PC-9 (cell line): ENCODE measurements at regions of chr19 and their contacts with region 1.

Region 1: DNA sequence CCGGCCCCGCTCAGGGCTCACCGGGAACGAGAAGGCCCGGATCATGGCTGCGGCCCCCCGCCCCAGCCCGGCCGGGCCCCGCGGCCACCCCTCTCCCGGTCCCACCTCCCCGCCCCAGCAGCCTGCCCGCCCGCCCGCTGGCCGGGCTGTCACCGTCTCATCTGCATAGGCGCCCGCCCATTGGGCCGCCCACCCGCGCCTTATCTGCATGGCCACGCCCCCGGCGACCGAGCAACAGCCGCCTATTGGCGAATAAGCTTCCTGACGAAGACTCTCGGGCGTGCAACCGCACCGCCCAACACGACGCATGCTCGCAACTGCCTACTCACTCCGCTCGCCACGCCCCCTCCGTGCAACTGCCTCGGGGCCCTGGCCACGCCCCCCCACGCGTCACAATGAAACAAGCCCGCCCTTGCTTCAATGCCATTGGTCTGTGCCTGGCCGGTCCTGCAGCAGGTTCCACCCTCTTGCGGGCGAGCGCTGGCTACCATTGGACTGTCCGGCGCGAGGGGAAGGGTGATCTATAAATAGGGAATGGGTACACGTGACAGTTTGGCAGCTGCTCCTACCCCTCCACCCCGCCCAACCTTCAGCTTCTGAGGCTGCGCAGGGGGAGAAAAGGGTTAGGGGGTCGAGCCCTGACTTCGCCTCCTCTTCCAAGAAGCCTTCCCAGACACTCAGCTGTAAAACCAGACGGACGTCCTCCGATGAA is at the start of gene DACT3:
- DNase-seq: peak; percentile 99 to 100
- H3K4me3 ChIP-seq: peak within 1 kb of the TSS; percentile 59
- H3K27ac ChIP-seq: no peak within 1 kb of the TSS
- H3K4me1 ChIP-seq: peaks cover 12% of the 10 kb centered on the region
- H3K27me3 ChIP-seq: peaks cover 31% of the 10 kb centered on the region
- CTCF ChIP-seq: no peak
- total RNA-seq, gene DACT3: 0.13 TPM in 1 of 2 replicates, not detected in the other

Region 2: GRCh38 chr19:46040952-46041500 is 620.1 kb before region 1 on chr19 and contains the start of gene IGFL4:
- CTCF ChIA-PET with region 1: no interaction called
- POLR2A ChIA-PET with region 1: interaction called, 16 read pairs
- intact Hi-C with region 1: no loop called
- DNase-seq: peak; percentile 40 to 80
- H3K4me3 ChIP-seq: no peak within 1 kb of the TSS
- H3K27ac ChIP-seq: no peak within 1 kb of the TSS
- H3K4me1 ChIP-seq: peaks cover 27% of the 10 kb centered on the region
- H3K27me3 ChIP-seq: peaks cover 33% of the 10 kb centered on the region; the same call in 1 of the 2 replicates
- CTCF ChIP-seq: no peak
- total RNA-seq, gene IGFL4: not detected in 2 replicates

Region 3: DNA sequence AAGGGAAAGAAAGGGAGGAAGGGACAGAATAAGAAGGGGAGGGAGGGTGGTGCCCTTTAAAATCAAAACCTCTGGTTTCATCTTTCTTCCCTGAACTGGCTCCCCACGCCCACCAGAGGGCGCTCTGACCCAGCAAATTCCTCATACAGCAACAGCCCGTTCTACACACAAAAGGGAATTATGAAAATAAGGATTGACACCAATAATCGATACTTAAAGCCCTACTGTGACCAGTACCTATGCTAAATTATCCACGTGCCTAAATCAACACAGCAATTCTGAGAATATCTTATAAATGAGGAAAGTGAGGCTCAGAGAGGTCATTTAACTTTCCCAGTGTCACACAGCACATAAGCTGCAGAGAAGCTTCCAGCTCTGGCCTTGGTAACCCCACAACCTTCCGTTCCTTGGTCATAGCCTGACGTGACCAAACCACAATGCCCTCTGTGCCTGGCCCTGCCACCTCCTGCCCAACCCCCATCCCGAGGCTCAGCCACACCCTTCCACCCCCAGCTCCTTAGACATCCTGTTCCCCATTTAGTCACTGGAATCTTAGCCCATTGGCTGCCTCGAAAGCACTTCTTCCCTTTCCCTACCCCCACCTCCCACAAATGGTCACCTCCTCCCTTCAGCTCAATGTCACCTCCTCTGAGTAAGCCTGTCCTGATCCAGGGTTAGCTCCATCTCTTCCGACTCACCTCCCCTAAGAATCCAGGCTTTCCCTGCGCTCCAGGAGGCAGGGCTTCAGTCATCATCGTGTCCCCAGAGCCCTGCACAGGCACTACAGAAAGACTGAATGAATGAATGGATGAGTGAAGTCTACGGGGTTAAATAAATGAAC is 131.3 kb before region 1 on chr19:
- CTCF ChIA-PET with region 1: interaction called, 7 read pairs
- POLR2A ChIA-PET with region 1: no interaction called
- intact Hi-C with region 1: loop called (anchors 1 kb)
- DNase-seq: peak; percentile 42 to 64
- H3K4me3 ChIP-seq: no peak overlapping the region
- H3K27ac ChIP-seq: no peak overlapping the region
- H3K4me1 ChIP-seq: peaks cover 8% of the 10 kb centered on the region; the same call in 1 of the 2 replicates
- H3K27me3 ChIP-seq: 0 out of 2 replicates have a peak, but pooled peaks cover 4% of the 10 kb centered on the region
- CTCF ChIP-seq: peak; percentile 98

Region 4: GRCh38 chr19:46571531-46571930 is 89.6 kb before region 1 on chr19:
- CTCF ChIA-PET with region 1: interaction called, 10 read pairs
- POLR2A ChIA-PET with region 1: no interaction called
- intact Hi-C with region 1: no loop called
- DNase-seq: peak; percentile 42 to 51
- H3K4me3 ChIP-seq: no peak overlapping the region
- H3K27ac ChIP-seq: no peak overlapping the region
- H3K4me1 ChIP-seq: no peaks in the 10 kb centered on the region
- H3K27me3 ChIP-seq: no peaks in the 10 kb centered on the region
- CTCF ChIP-seq: peak; percentile 39; the same call in 1 of the 2 replicates

Region 5: GRCh38 chr19:46634045-46634655 is 27.0 kb before region 1 on chr19:
- CTCF ChIA-PET with region 1: interaction called, 4 read pairs
- POLR2A ChIA-PET with region 1: no interaction called
- intact Hi-C with region 1: loop called (anchors 1 kb)
- DNase-seq: peak; percentile 79 to 97
- H3K4me3 ChIP-seq: peak overlapping the region; percentile 53
- H3K27ac ChIP-seq: no peak overlapping the region
- H3K4me1 ChIP-seq: peaks cover 14% of the 10 kb centered on the region
- H3K27me3 ChIP-seq: peaks cover 68% of the 10 kb centered on the region
- CTCF ChIP-seq: no peak

Region 6: GRCh38 chr19:46753420-46754155 is 92.4 kb after region 1 on chr19:
- CTCF ChIA-PET with region 1: no interaction called
- POLR2A ChIA-PET with region 1: interaction called, 13 read pairs
- intact Hi-C with region 1: no loop called
- DNase-seq: peak in 1 of 2 experiments; percentile 48
- H3K4me3 ChIP-seq: no peak overlapping the region
- H3K27ac ChIP-seq: no peak overlapping the region
- H3K4me1 ChIP-seq: no peaks in the 10 kb centered on the region
- H3K27me3 ChIP-seq: no peaks in the 10 kb centered on the region
- CTCF ChIP-seq: peak; percentile 61